Activated naive CD4-positive, alpha-beta T cell treated with anti-CD3 and anti-CD28 coated beads for 36 hours (primary cell): ENCODE measurements at regions of chr15 and their contacts with region 1.

Region 1: GRCh38 chr15:60006203-60006862 is 2.2 kb downstream of the FOXB1 start:
- DNase-seq: peak; percentile 83
- H3K4me3 Mint-ChIP-seq: peak overlapping the region; percentile 82
- H3K27ac Mint-ChIP-seq: peak overlapping the region; percentile 68
- H3K4me1 Mint-ChIP-seq: peaks cover 26% of the 10 kb centered on the region
- H3K27me3 Mint-ChIP-seq: peaks cover 87% of the 10 kb centered on the region

Region 2: DNA sequence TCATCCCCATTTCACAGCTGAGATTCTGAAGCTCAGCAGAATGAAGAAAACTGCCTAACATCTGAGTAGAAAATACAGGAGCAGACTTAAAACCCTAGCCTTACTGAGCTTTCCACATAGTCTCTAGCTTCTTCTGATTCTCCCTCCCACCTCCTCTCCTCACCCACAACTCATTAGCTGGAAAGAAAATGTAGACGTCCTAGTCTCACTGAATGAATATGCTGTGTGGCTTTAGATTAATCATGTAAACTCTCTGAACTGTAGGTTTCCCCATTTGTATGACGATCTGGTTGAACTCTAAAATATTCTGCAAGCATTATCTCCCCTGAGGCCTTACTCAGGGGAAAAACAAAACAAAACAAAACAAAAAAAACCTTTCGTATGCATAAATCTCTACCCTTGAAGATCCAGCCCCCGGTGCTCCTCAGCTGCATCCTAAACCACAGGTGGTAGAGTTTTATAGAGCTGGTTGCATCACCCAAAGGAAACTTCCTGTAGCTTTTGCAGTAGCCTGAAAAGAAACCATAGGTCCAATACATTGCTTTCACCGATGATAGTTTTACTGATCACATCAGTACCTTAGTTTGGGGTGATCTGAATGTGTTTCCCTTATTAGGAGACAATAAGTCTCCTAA is 38.4 kb after region 1 on chr15:
- CTCF ChIA-PET with region 1: interaction called, 4 read pairs
- intact Hi-C with region 1: loop called (anchors 1 kb)
- DNase-seq: peak; percentile 54
- H3K4me3 Mint-ChIP-seq: peak overlapping the region; percentile 35
- H3K27ac Mint-ChIP-seq: peak overlapping the region; percentile 23
- H3K4me1 Mint-ChIP-seq: peaks cover 21% of the 10 kb centered on the region
- H3K27me3 Mint-ChIP-seq: peaks cover 2% of the 10 kb centered on the region

Region 3: GRCh38 chr15:60079210-60079609 is 72.9 kb after region 1 on chr15:
- CTCF ChIA-PET with region 1: no interaction called
- intact Hi-C with region 1: loop called (anchors 5 kb)
- DNase-seq: no peak
- H3K4me3 Mint-ChIP-seq: no peak overlapping the region
- H3K27ac Mint-ChIP-seq: no peak overlapping the region
- H3K4me1 Mint-ChIP-seq: peaks cover 31% of the 10 kb centered on the region
- H3K27me3 Mint-ChIP-seq: no peaks in the 10 kb centered on the region

Region 4: DNA sequence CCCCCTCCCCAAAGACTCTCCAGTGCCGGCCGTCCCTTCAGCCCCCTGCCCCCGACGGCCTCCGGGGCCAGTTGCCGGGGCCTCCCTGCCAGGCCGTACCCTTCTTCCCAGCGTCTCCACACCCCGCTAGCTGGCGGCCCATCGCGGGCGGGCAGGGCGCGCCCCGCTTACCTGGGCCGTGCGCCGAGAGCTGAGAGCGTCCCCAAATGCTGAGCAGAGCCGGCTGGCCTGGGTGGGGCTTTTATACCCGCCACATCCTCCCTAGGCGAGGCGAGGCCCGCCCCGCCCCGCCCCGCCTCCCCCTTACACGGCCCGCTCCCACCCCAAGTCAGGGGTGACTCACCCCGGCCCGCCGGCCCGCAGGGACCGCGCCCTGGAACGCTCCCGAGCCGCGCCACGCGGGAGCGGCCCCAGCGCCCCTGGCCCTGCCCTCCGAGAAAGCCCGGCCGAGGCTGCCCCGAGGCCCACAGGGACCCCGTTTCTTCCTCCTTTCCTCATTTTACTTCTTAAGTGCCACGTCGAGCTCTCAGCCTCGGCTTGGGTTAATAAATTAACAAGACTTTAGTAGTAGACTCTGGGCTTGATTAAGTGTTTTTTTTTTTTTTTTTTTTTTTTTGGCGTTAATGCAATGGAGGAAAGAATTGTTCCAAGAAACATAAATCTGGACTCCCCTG is 391.6 kb after region 1 on chr15 and contains the start of gene ANXA2:
- CTCF ChIA-PET with region 1: no interaction called
- intact Hi-C with region 1: loop called (anchors 2 kb)
- DNase-seq: peak; percentile 80
- H3K4me3 Mint-ChIP-seq: peak within 1 kb of the TSS; percentile 72
- H3K27ac Mint-ChIP-seq: peak within 1 kb of the TSS; percentile 57
- H3K4me1 Mint-ChIP-seq: peaks cover 24% of the 10 kb centered on the region
- H3K27me3 Mint-ChIP-seq: no peaks in the 10 kb centered on the region
- total RNA-seq, gene ANXA2: 16.9 to 18.0 TPM